Ovary (tissue), 10 donors: ENCODE measurements at regions of chr6 and their contacts with region 1.

Region 1: DNA sequence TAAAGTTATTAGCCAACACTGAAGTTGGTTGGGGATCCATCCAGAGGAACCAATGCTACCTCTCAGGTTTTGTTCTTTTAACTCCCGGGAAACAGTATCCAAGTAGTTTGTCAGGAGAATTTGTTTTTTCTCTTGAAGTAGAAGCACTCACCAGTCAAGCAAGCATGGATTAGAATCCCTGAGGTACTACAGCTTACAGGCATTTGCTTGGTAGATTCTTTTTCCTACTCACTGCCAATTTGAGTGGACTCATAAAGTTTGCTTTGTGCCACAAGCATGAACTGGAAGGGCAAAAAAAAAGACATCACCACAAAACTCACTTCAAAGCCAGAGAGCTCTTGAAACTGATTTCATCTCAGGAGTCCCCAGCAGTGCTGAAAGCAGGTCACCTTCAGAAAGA is 167.4 kb downstream of the MBOAT1 start:
- DNase-seq: no peak
- H3K4me3 ChIP-seq: no peak overlapping the region
- H3K27ac ChIP-seq: no peak overlapping the region
- H3K4me1 ChIP-seq: no peaks in the 10 kb centered on the region
- H3K27me3 ChIP-seq: no peaks in the 10 kb centered on the region
- CTCF ChIP-seq: no peak
- EP300 ChIP-seq: no peak
- POLR2A ChIP-seq: no peak

Region 2: GRCh38 chr6:19204443-19204842 is 840.4 kb before region 1 on chr6:
- intact Hi-C with region 1: loop called in 1 of 4 experiments (anchors 5 kb)
- DNase-seq: no peak
- H3K4me3 ChIP-seq: no peak overlapping the region
- H3K27ac ChIP-seq: no peak overlapping the region
- H3K4me1 ChIP-seq: no peaks in the 10 kb centered on the region
- H3K27me3 ChIP-seq: no peaks in the 10 kb centered on the region
- CTCF ChIP-seq: no peak
- EP300 ChIP-seq: no peak
- POLR2A ChIP-seq: no peak